A549 (cell line): ENCODE measurements at regions of chr22 and their contacts with region 1.

Region 1: GRCh38 chr22:22710719-22711531 is 66.5 kb downstream of the GGTLC2 start:
- DNase-seq: peak; percentile 37 to 46
- ATAC-seq: peak; percentile 79 to 94
- H3K4me3 ChIP-seq: no peak overlapping the region
- H3K27ac ChIP-seq: peak overlapping the region; percentile 58 to 67; a peak in 5 of 6 replicates
- H3K4me1 ChIP-seq: peaks cover 18% of the 10 kb centered on the region
- CTCF ChIP-seq: peak; percentile 74
- EP300 ChIP-seq: no peak
- POLR2A ChIP-seq: no peak
- RAD21 ChIP-seq: peak; percentile 31 to 37; a peak in 3 of 5 replicates

Region 2: GRCh38 chr22:22609291-22609690 is 101.6 kb before region 1 on chr22:
- CTCF ChIA-PET with region 1: no interaction called
- POLR2A ChIA-PET with region 1: no interaction called
- DNase-seq: no peak
- ATAC-seq: no peak
- H3K4me3 ChIP-seq: no peak overlapping the region
- H3K27ac ChIP-seq: no peak overlapping the region
- H3K4me1 ChIP-seq: no peaks in the 10 kb centered on the region
- CTCF ChIP-seq: no peak
- EP300 ChIP-seq: no peak
- POLR2A ChIP-seq: no peak
- RAD21 ChIP-seq: no peak

Region 3: DNA sequence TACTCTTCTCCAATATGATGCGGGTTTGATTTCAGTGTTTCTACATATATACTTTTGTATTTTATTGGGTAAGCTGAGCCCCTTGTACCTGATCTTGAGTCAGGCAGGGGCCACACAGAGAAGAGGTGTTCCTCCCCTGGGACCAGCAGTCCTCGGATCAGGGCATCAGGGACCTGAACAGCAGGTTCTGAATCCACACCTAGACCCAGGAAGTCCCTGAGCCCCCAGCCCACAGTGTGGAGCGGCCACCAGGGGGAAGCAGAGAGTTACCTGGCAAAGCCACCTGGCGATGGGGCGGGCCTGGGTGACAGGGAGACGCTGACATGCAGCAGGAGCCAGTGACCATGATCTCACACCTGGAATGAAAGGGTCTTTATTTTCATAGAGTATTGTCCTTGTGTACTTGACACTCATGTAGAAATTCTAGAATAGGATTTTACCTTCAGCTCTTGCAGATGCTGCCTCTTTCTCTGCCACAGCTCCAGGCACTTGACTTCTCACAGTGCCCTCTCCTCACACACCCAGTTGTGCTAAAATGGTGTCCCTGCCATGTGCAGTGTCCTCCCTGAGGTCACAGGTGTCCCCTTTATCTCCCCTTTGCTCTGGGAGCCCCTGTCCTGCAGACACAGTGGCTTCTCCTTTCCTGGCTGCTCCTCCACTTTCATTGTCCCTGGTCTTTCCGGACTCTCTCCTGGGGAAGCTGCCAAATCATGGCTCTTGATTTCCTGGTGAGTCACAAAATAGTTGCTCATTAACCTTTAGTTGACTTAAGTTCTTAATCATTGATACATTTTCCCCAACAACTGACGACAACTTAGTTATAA is 18.0 kb before region 1 on chr22:
- CTCF ChIA-PET with region 1: interaction called, 69 read pairs
- POLR2A ChIA-PET with region 1: no interaction called
- DNase-seq: peak; percentile 56 to 69
- ATAC-seq: peak; percentile 87 to 89
- H3K4me3 ChIP-seq: 0 out of 3 replicates have a peak overlapping the region, but pooled peaks have one; percentile 16
- H3K27ac ChIP-seq: peak overlapping the region; percentile 89 to 90
- H3K4me1 ChIP-seq: peaks cover 42% of the 10 kb centered on the region
- CTCF ChIP-seq: peak; percentile 67
- EP300 ChIP-seq: no peak
- POLR2A ChIP-seq: no peak
- RAD21 ChIP-seq: peak; percentile 53 to 60; a peak in 4 of 5 replicates